ENCODE measurements at regions of chr13 and their contacts with region 1.

Region 1: GRCh38 chr13:28231642-28232041 is 93.3 kb downstream of the PAN3 start:
- DNase-seq: no peak
- ATAC-seq: no peak
- H3K4me3 ChIP-seq: no peak overlapping the region
- H3K4me3 Mint-ChIP-seq: no peak overlapping the region
- H3K27ac ChIP-seq: no peak overlapping the region
- H3K27ac Mint-ChIP-seq: no peak overlapping the region
- H3K4me1 ChIP-seq: no peaks in the 10 kb centered on the region
- H3K4me1 Mint-ChIP-seq: peaks cover 12 to 19% (median 14%) of the 10 kb centered on the region in 3 donors
- H3K27me3 ChIP-seq: no peaks in the 10 kb centered on the region
- H3K27me3 Mint-ChIP-seq: no peaks in the 10 kb centered on the region

Region 2: DNA sequence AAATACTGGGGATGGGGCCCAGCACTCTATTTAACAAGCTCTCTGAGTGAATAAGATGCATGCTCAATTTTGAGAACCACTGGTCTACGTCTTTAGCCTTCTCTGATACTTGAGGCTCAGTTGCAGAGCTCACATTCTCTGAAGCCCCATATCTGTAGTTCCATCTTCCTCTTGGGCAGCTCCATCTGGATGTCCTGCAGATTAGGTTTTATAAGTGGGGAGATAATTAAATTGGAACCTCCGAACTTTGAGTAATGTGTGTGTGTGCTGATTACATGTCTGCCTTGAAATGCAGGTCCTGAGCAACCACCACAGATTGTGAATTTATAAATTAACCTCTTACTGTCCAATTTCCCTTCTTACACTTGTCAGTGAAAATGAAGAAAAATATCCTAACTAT is 968.2 kb before region 1 on chr13:
- CTCF ChIA-PET with region 1: no interaction called
- POLR2A ChIA-PET with region 1: interaction called in 1 of 2 experiments, 10 read pairs
- DNase-seq: no peak
- ATAC-seq: no peak
- H3K4me3 ChIP-seq: no peak overlapping the region
- H3K4me3 Mint-ChIP-seq: no peak overlapping the region
- H3K27ac ChIP-seq: no peak overlapping the region
- H3K27ac Mint-ChIP-seq: peak overlapping the region; percentile 25 to 66
- H3K4me1 ChIP-seq: peaks cover 7 to 18% of the 10 kb centered on the region in 2 experiments
- H3K4me1 Mint-ChIP-seq: peaks cover 63 to 65% (median 64%) of the 10 kb centered on the region in 3 donors
- H3K27me3 ChIP-seq: no peaks in the 10 kb centered on the region
- H3K27me3 Mint-ChIP-seq: no peaks in the 10 kb centered on the region

Region 3: DNA sequence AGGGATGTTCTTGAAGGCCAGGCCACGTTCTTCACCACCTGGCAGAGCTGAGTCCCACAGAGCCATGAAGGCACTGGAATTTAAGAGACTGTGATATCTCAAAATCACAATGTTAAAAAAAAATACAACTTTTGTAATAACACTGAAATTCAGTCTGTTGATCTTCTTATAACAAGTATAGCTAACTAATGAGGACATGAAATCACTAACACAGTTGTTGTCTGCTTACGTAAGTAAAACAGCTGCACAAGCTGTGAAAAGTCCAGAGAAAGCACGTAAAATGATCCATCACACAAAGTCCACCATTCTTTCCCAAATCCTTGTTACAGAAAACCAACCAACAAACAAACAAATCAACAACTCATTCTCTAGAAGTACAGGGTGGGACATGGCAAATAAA is 164.2 kb before region 1 on chr13:
- CTCF ChIA-PET with region 1: no interaction called
- POLR2A ChIA-PET with region 1: no interaction called
- DNase-seq: no peak
- ATAC-seq: no peak
- H3K4me3 ChIP-seq: no peak overlapping the region
- H3K4me3 Mint-ChIP-seq: no peak overlapping the region
- H3K27ac ChIP-seq: no peak overlapping the region
- H3K27ac Mint-ChIP-seq: no peak overlapping the region
- H3K4me1 ChIP-seq: no peaks in the 10 kb centered on the region
- H3K4me1 Mint-ChIP-seq: peaks cover 4 to 7% (median 6%) of the 10 kb centered on the region in 3 donors
- H3K27me3 ChIP-seq: no peaks in the 10 kb centered on the region
- H3K27me3 Mint-ChIP-seq: peaks cover 0 to 3% of the 10 kb centered on the region in 2 donors

Measured in T-cell (primary cell).